Aorta (tissue), 5 donors: ENCODE measurements at regions of chr22 and their contacts with region 1.

Region 1: GRCh38 chr22:40764763-40765441 is 54.2 kb downstream of the SLC25A17 start:
- DNase-seq: no peak
- ATAC-seq: no peak
- H3K4me3 ChIP-seq: no peak overlapping the region
- H3K27ac ChIP-seq: no peak overlapping the region
- H3K4me1 ChIP-seq: no peaks in the 10 kb centered on the region
- H3K27me3 ChIP-seq: no peaks in the 10 kb centered on the region

Region 2: DNA sequence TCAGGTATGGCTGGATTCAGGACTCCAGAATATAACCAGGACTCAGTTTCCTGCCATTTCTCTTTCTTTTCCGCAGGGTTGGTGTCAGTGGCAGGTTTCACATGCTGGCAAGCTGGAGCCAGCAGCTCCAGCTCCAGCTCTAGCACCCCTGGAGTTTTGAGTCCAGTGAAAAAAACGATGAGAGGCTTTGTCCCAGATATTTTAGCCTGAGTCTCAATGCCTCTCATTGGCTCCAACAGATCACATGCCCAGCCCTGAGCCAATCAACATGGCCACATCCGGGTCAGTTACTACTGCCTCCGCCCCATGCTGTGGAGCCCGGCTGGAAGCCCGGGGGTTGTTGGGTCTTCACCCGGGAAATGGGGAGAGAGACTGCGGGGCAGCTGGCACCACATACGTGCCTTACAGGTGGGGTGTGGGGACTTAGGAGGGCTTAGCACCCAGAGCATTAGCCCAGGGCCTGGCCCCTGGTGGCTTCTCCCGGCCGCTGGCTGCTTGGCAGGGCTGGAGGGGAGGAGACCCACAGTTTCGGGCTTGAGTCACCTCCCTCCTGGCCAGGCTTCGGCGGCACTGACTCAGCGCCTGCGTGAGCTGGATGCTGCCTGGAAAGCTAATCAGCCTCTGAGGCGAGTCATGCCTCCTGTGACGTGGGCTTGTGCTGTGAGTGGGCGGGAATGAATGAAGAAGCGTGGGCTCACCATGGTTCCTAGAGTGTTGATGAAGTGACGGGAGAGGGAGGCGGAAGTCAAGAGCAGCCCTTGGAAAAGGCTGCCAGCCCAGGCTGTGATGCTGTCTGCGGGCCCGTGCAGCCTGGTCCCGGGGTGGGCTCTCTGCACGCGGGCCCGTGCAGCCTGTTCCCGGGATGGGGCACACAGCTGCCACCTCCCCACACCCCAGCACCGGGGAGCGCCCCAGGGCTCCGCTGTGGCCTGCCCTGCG is 113.1 kb before region 1 on chr22:
- intact Hi-C with region 1: loop called in 1 of 2 experiments (anchors 10 kb)
- DNase-seq: peak; percentile 98
- ATAC-seq: peak; percentile 96
- H3K4me3 ChIP-seq: peak overlapping the region; percentile 17 to 75
- H3K27ac ChIP-seq: peak overlapping the region in 1 of 2 donors; percentile 98
- H3K4me1 ChIP-seq: peaks cover 0 to 1% of the 10 kb centered on the region in 2 donors
- H3K27me3 ChIP-seq: no peaks in the 10 kb centered on the region

Region 3: GRCh38 chr22:40684728-40685127 is 80.2 kb before region 1 on chr22:
- intact Hi-C with region 1: loop called in 1 of 2 experiments (anchors 2 kb)
- DNase-seq: no peak
- ATAC-seq: no peak
- H3K4me3 ChIP-seq: no peak overlapping the region
- H3K27ac ChIP-seq: no peak overlapping the region
- H3K4me1 ChIP-seq: no peaks in the 10 kb centered on the region
- H3K27me3 ChIP-seq: no peaks in the 10 kb centered on the region

Region 4: GRCh38 chr22:40739721-40740120 is 25.2 kb before region 1 on chr22:
- intact Hi-C with region 1: no loop called
- DNase-seq: no peak
- ATAC-seq: no peak
- H3K4me3 ChIP-seq: no peak overlapping the region
- H3K27ac ChIP-seq: no peak overlapping the region
- H3K4me1 ChIP-seq: no peaks in the 10 kb centered on the region
- H3K27me3 ChIP-seq: no peaks in the 10 kb centered on the region

Region 5: GRCh38 chr22:40898850-40899357 is 134.0 kb after region 1 on chr22:
- intact Hi-C with region 1: no loop called
- DNase-seq: no peak
- ATAC-seq: no peak
- H3K4me3 ChIP-seq: no peak overlapping the region
- H3K27ac ChIP-seq: no peak overlapping the region
- H3K4me1 ChIP-seq: no peaks in the 10 kb centered on the region
- H3K27me3 ChIP-seq: no peaks in the 10 kb centered on the region